T-cell (primary cell): ENCODE measurements at regions of chr6 and their contacts with region 1.

Region 1: DNA sequence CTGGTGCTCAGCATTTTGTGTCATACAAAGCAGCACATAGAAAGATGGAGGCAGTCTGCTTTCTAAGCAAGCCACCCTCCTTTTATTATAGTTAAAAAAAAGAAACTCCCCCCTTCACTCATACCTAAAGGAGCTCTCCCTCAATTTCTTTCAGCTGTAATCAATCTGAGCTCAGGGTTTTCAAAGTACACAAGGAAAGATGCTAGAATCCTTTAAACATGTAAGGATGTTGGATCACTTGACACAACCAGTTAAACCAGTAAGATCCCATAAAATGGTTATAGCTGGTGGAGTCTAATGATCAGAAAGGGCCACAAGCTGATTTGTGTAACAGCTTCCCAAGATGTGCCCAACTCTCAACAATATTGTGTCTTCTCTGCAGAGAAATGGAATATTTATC is at the start of gene CALHM4:
- DNase-seq: no peak
- ATAC-seq: no peak
- H3K4me3 ChIP-seq: no peak within 1 kb of the TSS
- H3K4me3 Mint-ChIP-seq: no peak within 1 kb of the TSS
- H3K27ac ChIP-seq: no peak within 1 kb of the TSS
- H3K27ac Mint-ChIP-seq: no peak within 1 kb of the TSS
- H3K4me1 ChIP-seq: no peaks in the 10 kb centered on the region
- H3K4me1 Mint-ChIP-seq: no peaks in the 10 kb centered on the region
- H3K27me3 ChIP-seq: peaks cover 0 to 3% of the 10 kb centered on the region in 2 experiments
- H3K27me3 Mint-ChIP-seq: peaks cover 5 to 23% of the 10 kb centered on the region in 2 donors
- total RNA-seq, gene CALHM4: not detected

Region 2: DNA sequence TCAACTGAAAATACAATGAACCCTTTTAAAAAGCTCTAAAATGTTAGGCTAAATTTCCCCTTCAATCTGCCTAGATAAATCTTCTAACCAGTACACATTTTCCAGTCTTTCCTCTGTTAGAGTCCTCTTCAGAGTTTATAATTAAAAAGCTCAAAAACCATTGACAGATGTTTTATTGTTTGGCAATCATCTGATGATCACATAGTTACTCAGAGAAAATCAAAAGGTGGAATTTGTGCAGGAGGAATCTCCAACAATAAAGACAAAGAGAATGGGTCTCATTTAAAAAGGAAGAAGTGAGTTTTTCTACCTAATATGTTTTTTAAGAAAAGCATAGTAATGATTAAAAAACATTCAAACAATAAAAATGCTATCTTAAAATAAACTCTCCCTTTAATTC is 11.0 kb before region 1 on chr6:
- CTCF ChIA-PET with region 1: interaction called, 6 to 10 read pairs
- POLR2A ChIA-PET with region 1: no interaction called
- DNase-seq: no peak
- ATAC-seq: no peak
- H3K4me3 ChIP-seq: no peak overlapping the region
- H3K4me3 Mint-ChIP-seq: no peak overlapping the region
- H3K27ac ChIP-seq: no peak overlapping the region
- H3K27ac Mint-ChIP-seq: no peak overlapping the region
- H3K4me1 ChIP-seq: no peaks in the 10 kb centered on the region
- H3K4me1 Mint-ChIP-seq: no peaks in the 10 kb centered on the region
- H3K27me3 ChIP-seq: peaks cover 0 to 3% of the 10 kb centered on the region in 2 experiments
- H3K27me3 Mint-ChIP-seq: peaks cover 18 to 23% of the 10 kb centered on the region in 2 donors